PC-3 (cell line): ENCODE measurements at regions of chr12 and their contacts with region 1.

Region 1: DNA sequence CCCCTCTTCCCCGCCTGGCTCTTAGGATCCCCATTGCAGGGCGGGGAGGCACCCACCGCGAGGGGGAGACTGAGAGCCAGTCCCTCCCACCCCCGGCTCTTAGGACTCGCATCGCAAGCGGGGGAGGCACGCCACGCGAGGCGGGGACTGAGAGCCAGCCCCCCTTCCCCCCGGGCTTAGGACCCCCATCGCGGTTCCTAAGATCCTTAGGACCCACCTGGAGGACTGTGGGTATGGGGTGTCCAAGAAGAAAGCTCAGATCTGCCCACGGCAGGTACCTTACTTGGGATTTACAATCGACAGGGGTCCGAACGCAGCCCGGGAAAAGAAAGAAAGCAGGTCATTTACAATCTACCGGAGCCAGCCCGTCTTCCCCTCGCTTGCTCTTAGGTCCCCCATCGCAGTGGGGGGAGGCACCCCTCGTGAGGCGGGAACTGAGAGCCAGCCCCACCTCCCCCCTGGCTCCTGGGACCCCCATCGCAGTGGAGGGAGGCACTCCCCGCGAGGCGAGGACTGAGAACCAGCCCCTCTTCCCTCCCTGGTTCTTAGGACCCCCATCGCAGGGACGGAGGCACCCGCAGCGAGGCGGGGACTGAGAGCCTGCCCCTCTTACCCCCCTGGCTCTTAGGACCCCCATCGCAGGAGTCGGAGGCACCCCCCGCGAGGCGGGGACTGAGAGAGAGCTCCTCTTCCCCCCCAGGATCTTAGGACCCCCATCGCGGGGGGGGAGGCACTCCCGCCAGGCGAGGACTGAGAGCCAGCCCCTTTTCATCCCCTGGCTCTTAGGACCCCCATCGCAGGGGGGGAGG is 43.7 kb downstream of the DDX11 start:
- DNase-seq: peak; percentile 61
- ATAC-seq: peak; percentile 87
- H3K4me3 ChIP-seq: peak overlapping the region; percentile 71
- H3K27ac ChIP-seq: no peak overlapping the region
- H3K4me1 ChIP-seq: peaks cover 8% of the 10 kb centered on the region; the same call in 1 of the 2 replicates
- H3K27me3 ChIP-seq: peaks cover 10% of the 10 kb centered on the region
- CTCF ChIP-seq: peak; percentile 77

Region 2: GRCh38 chr12:30874455-30875321 is 242.7 kb before region 1 on chr12:
- CTCF ChIA-PET with region 1: no interaction called
- POLR2A ChIA-PET with region 1: no interaction called
- intact Hi-C with region 1: no loop called
- DNase-seq: no peak
- ATAC-seq: no peak
- H3K4me3 ChIP-seq: no peak overlapping the region
- H3K27ac ChIP-seq: no peak overlapping the region
- H3K4me1 ChIP-seq: no peaks in the 10 kb centered on the region
- H3K27me3 ChIP-seq: no peaks in the 10 kb centered on the region
- CTCF ChIP-seq: no peak

Region 3: DNA sequence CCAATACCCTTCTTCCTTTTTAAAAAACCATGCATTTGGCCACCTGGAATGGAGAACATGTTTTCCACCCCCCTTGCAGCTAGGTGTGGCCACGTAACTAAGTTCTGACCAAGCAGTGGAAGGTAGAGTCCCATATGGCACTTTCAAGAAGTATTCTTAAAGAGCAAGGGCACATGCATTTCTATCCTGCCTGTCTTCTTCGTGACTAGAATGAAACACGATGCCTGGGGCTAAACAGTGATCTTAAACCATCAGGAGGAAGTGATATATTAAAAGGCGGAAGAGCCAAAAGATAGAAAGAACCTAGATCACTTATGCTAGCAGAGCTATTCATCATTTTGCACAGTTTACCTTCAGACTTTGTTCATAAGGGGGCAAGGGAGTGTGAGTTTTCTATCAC is 59.7 kb before region 1 on chr12:
- CTCF ChIA-PET with region 1: no interaction called
- POLR2A ChIA-PET with region 1: no interaction called
- intact Hi-C with region 1: no loop called
- DNase-seq: no peak
- ATAC-seq: no peak
- H3K4me3 ChIP-seq: no peak overlapping the region
- H3K27ac ChIP-seq: no peak overlapping the region
- H3K4me1 ChIP-seq: peaks cover 10% of the 10 kb centered on the region
- H3K27me3 ChIP-seq: no peaks in the 10 kb centered on the region
- CTCF ChIP-seq: no peak

Region 4: GRCh38 chr12:31238764-31239387 is 121.5 kb after region 1 on chr12:
- CTCF ChIA-PET with region 1: no interaction called
- POLR2A ChIA-PET with region 1: interaction called, 11 read pairs
- intact Hi-C with region 1: loop called (anchors 2 kb)
- DNase-seq: peak; percentile 90
- ATAC-seq: peak; percentile 83
- H3K4me3 ChIP-seq: peak overlapping the region; percentile 41; the same call in 1 of the 2 replicates
- H3K27ac ChIP-seq: no peak overlapping the region
- H3K4me1 ChIP-seq: no peaks in the 10 kb centered on the region
- H3K27me3 ChIP-seq: peaks cover 25% of the 10 kb centered on the region
- CTCF ChIP-seq: peak; percentile 94